Gastrocnemius medialis (tissue), 4 donors: ENCODE measurements at regions of chr4 and their contacts with region 1.

Region 1: GRCh38 chr4:41281038-41281634 is 24.4 kb downstream of the UCHL1 start:
- DNase-seq: peak; percentile 9 to 21
- ATAC-seq: peak; percentile 99 to 100
- H3K4me3 ChIP-seq: no peak overlapping the region
- H3K27ac ChIP-seq: no peak overlapping the region
- H3K4me1 ChIP-seq: no peaks in the 10 kb centered on the region
- H3K27me3 ChIP-seq: no peaks in the 10 kb centered on the region
- CTCF ChIP-seq: peak; percentile 84 to 91 (median 88)
- POLR2A ChIP-seq: no peak

Region 2: DNA sequence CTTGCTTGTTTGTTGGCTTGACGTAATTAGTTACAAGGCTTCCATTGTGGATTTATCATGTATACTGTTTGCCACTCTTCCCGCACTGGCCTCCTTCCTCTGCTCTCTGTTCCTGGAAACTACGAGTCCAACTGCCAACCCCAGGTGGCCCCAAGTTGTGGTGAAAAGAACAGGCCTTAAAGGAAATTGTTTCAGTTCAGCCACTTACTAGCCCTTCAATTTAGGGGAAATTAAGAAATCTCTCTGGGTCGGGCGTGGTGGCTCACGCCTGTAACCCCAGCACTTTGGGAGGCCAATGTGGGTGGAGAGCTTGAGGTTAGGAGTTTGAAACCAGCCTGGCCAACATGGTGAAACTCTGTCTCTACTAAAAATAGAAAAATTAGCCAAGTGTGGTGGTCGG is 679.5 kb before region 1 on chr4:
- in situ Hi-C with region 1: no loop called
- intact Hi-C with region 1: no loop called
- DNase-seq: no peak
- ATAC-seq: no peak
- H3K4me3 ChIP-seq: no peak overlapping the region
- H3K27ac ChIP-seq: no peak overlapping the region
- H3K4me1 ChIP-seq: no peaks in the 10 kb centered on the region
- H3K27me3 ChIP-seq: no peaks in the 10 kb centered on the region
- CTCF ChIP-seq: no peak
- POLR2A ChIP-seq: no peak

Region 3: DNA sequence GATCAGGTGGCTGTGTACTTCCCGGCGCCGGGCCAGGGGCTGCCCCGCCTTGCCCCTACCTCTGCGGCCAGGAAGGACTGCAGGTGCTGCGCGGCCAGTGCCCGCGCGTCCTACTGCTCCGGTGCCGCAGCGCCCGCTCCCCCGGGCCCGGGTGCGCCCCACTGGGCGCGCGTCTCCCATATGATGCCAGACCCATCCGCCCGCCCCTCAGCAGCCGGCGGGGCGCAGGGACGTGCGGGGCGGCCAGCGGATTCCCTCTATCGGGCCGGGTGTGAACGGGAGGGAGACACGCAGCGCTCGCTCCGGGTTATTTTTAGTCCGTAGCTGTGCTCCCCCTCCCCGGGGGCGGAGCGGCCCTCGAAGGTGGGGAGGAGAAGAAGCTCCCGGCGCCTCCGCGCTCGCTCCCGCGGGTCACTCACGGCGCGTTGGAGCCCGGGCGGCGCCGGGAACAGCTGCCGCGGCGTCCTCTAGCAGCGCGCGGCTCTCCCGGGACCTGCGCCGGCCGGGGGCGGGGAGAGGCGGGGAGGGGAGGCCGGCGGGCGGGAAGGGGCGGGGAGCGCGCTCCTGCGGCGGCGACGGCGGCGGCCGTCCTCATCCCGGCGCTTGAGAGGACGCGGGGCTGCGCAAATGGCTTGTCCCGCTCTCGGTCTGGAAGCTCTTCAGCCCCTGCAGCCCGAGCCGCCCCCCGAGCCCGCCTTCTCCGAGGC is 79.2 kb after region 1 on chr4:
- in situ Hi-C with region 1: no loop called
- intact Hi-C with region 1: loop called (anchors 5 kb)
- DNase-seq: peak; percentile 62 to 83
- ATAC-seq: peak; percentile 45 to 56
- H3K4me3 ChIP-seq: peak overlapping the region; percentile 84 to 96 (median 92)
- H3K27ac ChIP-seq: peak overlapping the region; percentile 89 to 93 (median 90)
- H3K4me1 ChIP-seq: peaks cover 34 to 35% of the 10 kb centered on the region in 2 donors
- H3K27me3 ChIP-seq: no peaks in the 10 kb centered on the region
- CTCF ChIP-seq: peak in 1 of 5 experiments; percentile 14
- POLR2A ChIP-seq: peak; percentile 22 to 55

Region 4: GRCh38 chr4:41644288-41644914 is 363.3 kb after region 1 on chr4:
- in situ Hi-C with region 1: loop called in 1 of 4 experiments (anchors 5 kb)
- intact Hi-C with region 1: loop called (anchors 5 kb)
- DNase-seq: peak; percentile 43 to 71
- ATAC-seq: peak; percentile 92 to 93
- H3K4me3 ChIP-seq: peak overlapping the region in 3 of 4 donors; percentile 32 to 47 (median 37)
- H3K27ac ChIP-seq: peak overlapping the region; percentile 3 to 74 (median 36)
- H3K4me1 ChIP-seq: peaks cover 3 to 18% of the 10 kb centered on the region in 2 donors
- H3K27me3 ChIP-seq: no peaks in the 10 kb centered on the region
- CTCF ChIP-seq: peak; percentile 77 to 92 (median 88)
- POLR2A ChIP-seq: no peak

Region 5: GRCh38 chr4:41661442-41662076 is 380.4 kb after region 1 on chr4:
- in situ Hi-C with region 1: loop called in 1 of 4 experiments (anchors 5 kb)
- intact Hi-C with region 1: loop called (anchors 1 kb)
- DNase-seq: peak; percentile 6 to 47
- ATAC-seq: peak in 1 of 2 donors; percentile 47
- H3K4me3 ChIP-seq: no peak overlapping the region
- H3K27ac ChIP-seq: no peak overlapping the region
- H3K4me1 ChIP-seq: peaks cover 14 to 15% of the 10 kb centered on the region in 2 donors
- H3K27me3 ChIP-seq: no peaks in the 10 kb centered on the region
- CTCF ChIP-seq: peak; percentile 79 to 97 (median 90)
- POLR2A ChIP-seq: no peak